CD8-positive, alpha-beta T cell (primary cell): ENCODE measurements at regions of chr1 and their contacts with region 1.

Region 1: GRCh38 chr1:44775078-44775929 is at the start of gene RPS8:
- DNase-seq: peak; percentile 77 to 96 (median 90)
- ATAC-seq: peak; percentile 80
- H3K4me3 ChIP-seq: peak within 1 kb of the TSS; percentile 84 to 94
- H3K4me3 Mint-ChIP-seq: peak within 1 kb of the TSS; percentile 92
- H3K27ac ChIP-seq: peak within 1 kb of the TSS; percentile 92 to 95
- H3K27ac Mint-ChIP-seq: peak within 1 kb of the TSS; percentile 98
- H3K4me1 ChIP-seq: peaks cover 25% of the 10 kb centered on the region
- H3K4me1 Mint-ChIP-seq: peaks cover 39% of the 10 kb centered on the region
- H3K27me3 ChIP-seq: no peaks in the 10 kb centered on the region
- H3K27me3 Mint-ChIP-seq: no peaks in the 10 kb centered on the region
- CTCF ChIP-seq: no peak
- total RNA-seq, gene RPS8: 3,381 to 3,465 TPM

Region 2: DNA sequence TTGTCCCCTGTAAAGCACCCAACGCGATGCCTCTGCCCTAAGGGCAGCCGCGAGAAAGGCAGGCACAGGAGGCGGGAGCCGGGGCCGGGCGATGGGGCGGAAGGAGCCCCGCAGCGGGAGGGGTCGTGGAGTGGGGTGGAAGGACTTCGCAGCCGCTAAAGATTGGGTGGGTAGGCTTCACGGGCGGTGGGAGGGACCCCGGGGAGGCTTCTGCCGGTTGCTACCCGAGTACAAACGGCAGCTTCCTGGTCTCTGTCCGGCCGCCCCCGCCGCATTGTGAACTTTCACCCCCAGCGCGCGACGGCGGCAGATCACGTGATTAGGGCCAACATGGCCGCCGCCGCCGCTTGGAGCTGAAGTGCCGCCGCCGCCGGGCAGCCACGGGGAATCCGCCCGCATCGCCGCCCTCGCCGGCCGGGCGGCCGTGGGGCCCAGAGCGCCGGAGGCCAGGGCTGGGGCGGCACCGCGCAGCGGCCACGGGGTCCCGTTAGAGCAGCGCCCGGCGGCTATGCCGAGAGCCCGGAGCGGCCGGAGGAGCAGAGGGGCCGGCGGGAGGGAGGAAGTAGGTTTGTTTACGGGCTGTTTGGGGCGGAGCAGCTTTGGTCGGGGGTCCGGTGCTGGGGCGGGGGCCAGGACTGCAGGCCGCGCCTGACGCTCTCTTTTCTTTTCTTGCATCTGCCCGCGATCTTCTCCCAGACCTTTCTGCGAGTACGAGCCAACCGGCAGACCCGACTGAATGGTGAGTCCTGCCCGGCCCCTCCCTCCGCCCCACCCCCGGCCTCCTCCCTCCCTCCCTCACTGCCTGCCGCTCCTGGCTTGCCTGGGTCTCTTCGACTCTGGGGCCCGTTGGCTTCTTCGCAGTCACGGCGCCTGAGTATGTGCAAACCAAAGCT is 143.4 kb before region 1 on chr1:
- CTCF ChIA-PET with region 1: no interaction called
- POLR2A ChIA-PET with region 1: interaction called, 3 read pairs
- intact Hi-C with region 1: loop called in 1 of 2 experiments (anchors 1 kb)
- DNase-seq: peak; percentile 73 to 95 (median 88)
- ATAC-seq: peak; percentile 75
- H3K4me3 ChIP-seq: peak overlapping the region; percentile 55 to 82
- H3K4me3 Mint-ChIP-seq: peak overlapping the region; percentile 90
- H3K27ac ChIP-seq: peak overlapping the region; percentile 86 to 97
- H3K27ac Mint-ChIP-seq: peak overlapping the region; percentile 98
- H3K4me1 ChIP-seq: peaks cover 20% of the 10 kb centered on the region
- H3K4me1 Mint-ChIP-seq: peaks cover 48% of the 10 kb centered on the region
- H3K27me3 ChIP-seq: no peaks in the 10 kb centered on the region
- H3K27me3 Mint-ChIP-seq: no peaks in the 10 kb centered on the region
- CTCF ChIP-seq: no peak

Region 3: DNA sequence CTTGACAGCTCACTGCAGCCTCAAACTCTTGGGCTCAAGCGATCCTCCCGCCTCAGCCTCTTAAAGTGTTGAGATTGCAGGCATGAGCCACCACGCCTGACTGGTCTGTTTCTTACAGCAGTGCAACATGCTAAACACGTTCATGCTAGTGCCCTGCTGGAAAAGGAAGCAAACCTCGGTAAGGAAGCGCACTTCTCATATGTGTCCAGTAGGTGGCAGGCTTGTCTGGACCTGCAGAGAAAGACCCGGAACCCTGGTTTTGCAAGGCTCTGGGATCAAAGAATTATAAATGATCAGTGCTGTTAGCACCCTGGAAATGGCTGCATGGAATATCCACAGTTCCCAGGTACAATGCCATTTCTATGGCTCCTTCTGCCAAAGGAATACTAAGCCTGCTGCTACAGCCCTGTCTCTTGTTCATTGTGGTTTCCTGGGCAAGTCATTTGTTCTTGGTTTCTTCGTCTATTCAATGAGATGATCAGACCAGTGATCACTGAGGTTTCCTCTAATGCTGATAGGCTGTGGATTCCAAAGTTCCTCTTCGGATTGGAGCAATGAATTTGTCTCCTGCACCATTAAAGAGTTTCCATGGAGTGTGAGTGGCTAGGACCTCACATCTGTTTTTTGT is 60.2 kb before region 1 on chr1:
- CTCF ChIA-PET with region 1: interaction called, 7 read pairs
- POLR2A ChIA-PET with region 1: no interaction called
- intact Hi-C with region 1: loop called in 1 of 2 experiments (anchors 2 kb)
- DNase-seq: peak; percentile 37 to 87 (median 63)
- ATAC-seq: peak; percentile 94
- H3K4me3 ChIP-seq: peak overlapping the region in 1 of 2 experiments; percentile 1
- H3K4me3 Mint-ChIP-seq: peak overlapping the region; percentile 64
- H3K27ac ChIP-seq: no peak overlapping the region
- H3K27ac Mint-ChIP-seq: peak overlapping the region; percentile 37
- H3K4me1 ChIP-seq: peaks cover 44% of the 10 kb centered on the region
- H3K4me1 Mint-ChIP-seq: peaks cover 44% of the 10 kb centered on the region
- H3K27me3 ChIP-seq: no peaks in the 10 kb centered on the region
- H3K27me3 Mint-ChIP-seq: no peaks in the 10 kb centered on the region
- CTCF ChIP-seq: peak; percentile 96

Region 4: DNA sequence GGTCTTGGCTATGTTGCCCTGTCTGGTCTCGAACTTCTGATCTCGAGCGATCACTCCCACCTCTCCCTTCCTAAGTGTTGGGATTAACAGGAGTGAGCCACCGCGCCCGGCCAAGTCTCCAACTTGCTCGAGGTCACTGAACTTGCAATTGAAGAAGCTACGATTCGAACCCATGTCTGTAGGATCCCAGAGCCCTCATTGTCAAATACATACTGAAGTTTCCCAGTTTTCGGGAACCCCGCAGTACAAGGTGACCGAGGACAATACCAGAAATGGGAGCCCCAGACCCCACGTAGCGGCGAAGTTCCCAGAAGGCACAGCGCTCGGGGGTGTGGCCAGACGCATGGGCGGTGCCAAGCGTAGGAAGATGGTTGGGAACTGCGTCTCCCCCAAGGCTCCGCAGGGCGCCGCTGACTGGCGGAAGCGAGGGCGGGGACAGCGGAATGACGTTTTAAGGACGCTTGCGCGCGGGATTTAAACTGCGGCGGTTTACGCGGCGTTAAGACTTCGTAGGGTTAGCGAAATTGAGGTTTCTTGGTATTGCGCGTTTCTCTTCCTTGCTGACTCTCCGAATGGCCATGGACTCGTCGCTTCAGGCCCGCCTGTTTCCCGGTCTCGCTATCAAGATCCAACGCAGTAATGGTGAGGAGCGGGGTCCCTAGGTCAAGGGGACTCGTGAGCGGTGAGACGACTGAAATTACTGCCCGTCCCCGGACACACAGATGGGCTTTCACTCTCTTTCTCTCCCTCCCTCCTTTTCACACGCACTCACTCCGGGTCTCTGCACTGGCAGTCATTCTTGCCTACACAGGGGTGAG is 35.7 kb before region 1 on chr1 and contains the start of gene KIF2C:
- CTCF ChIA-PET with region 1: no interaction called
- POLR2A ChIA-PET with region 1: interaction called, 9 read pairs
- intact Hi-C with region 1: loop called (anchors 1 kb)
- DNase-seq: peak; percentile 93 to 98 (median 96)
- ATAC-seq: peak; percentile 100
- H3K4me3 ChIP-seq: peak within 1 kb of the TSS; percentile 81 to 84
- H3K4me3 Mint-ChIP-seq: peak within 1 kb of the TSS; percentile 93
- H3K27ac ChIP-seq: peak within 1 kb of the TSS; percentile 69 to 88
- H3K27ac Mint-ChIP-seq: peak within 1 kb of the TSS; percentile 97
- H3K4me1 ChIP-seq: peaks cover 12% of the 10 kb centered on the region
- H3K4me1 Mint-ChIP-seq: peaks cover 17% of the 10 kb centered on the region
- H3K27me3 ChIP-seq: no peaks in the 10 kb centered on the region
- H3K27me3 Mint-ChIP-seq: no peaks in the 10 kb centered on the region
- CTCF ChIP-seq: no peak
- total RNA-seq, gene KIF2C: 0.58 to 0.81 TPM

Region 5: DNA sequence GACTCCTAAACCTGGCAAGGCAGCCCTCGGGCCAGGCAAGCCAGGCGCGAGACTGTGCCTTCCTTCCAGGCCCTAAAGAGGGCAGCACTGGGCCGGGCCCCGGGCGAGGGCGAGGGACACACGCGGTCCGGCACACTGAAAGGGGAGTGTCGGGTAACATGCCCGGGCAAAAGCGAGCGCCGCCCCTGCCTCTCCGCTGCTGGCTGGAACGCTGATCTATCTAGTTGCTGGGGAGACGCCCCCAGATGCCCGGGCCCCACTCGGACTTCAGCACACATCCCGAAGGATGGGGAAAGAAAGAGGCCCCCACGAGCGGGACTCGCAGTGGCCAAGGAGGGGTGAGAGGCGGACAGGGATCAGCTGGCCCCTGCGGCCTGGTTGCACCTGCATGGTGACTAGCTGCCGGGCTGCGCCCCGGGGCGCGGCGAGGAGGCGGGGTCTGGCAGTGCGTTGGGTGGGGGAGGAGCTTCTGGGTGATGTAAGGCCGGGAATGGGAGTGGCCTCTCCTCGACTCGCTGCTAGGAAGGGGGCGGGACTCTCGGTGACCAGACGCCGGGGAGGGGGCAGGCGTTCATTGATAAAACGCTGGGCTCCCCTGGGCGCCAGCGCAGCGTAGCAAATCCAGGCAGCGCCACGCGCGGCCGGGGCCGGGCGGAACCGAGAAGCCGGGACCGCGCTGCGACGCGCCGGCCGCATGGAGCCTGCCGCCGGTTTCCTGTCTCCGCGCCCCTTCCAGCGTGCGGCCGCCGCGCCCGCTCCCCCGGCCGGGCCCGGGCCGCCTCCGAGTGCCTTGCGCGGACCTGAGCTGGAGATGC is 24.7 kb after region 1 on chr1 and contains the start of gene PLK3:
- CTCF ChIA-PET with region 1: no interaction called
- POLR2A ChIA-PET with region 1: interaction called, 22 read pairs
- intact Hi-C with region 1: loop called in 1 of 2 experiments (anchors 2 kb)
- DNase-seq: peak; percentile 97 to 99 (median 98)
- ATAC-seq: peak; percentile 83
- H3K4me3 ChIP-seq: peak within 1 kb of the TSS; percentile 79 to 95
- H3K4me3 Mint-ChIP-seq: peak within 1 kb of the TSS; percentile 87
- H3K27ac ChIP-seq: peak within 1 kb of the TSS; percentile 91 to 98
- H3K27ac Mint-ChIP-seq: peak within 1 kb of the TSS; percentile 98
- H3K4me1 ChIP-seq: peaks cover 29% of the 10 kb centered on the region
- H3K4me1 Mint-ChIP-seq: peaks cover 37% of the 10 kb centered on the region
- H3K27me3 ChIP-seq: no peaks in the 10 kb centered on the region
- H3K27me3 Mint-ChIP-seq: no peaks in the 10 kb centered on the region
- CTCF ChIP-seq: peak; percentile 81
- total RNA-seq, gene PLK3: 568 to 599 TPM

Region 6: DNA sequence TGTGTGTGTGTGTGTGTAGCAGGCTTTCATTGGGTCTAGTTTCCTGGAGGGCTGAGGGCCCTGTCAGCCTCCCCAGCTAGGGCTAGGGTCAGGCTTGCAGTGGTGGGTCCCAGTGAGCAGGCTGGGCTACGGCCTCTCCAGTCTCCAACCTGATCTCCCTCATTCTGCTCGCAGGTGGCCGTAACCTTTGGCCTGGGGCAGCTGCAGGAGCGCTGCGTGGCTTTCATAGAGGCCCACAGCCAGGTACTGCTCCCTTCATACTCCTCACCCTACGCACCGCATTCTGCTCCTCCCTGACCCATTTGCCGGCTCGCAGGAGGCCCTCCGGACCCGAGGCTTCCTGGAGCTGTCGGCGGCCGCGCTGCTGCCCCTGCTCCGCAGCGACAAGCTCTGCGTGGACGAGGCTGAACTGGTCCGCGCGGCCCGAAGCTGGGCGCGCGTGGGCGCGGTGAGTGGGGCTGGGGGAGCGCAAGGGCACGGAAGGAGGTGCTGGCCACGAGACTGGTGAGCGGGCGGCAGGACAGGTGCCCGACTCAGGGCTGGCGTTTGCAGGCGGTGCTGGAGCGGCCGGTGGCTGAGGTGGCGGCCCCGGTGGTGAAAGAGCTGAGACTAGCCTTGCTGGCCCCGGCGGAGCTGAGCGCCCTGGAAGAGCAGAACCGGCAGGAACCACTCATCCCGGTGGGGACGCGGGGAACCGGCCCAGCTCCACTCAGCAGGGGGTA is 37.7 kb after region 1 on chr1:
- CTCF ChIA-PET with region 1: no interaction called
- POLR2A ChIA-PET with region 1: interaction called, 28 read pairs
- intact Hi-C with region 1: no loop called
- DNase-seq: peak in 2 of 9 experiments; percentile 27 to 50
- ATAC-seq: no peak
- H3K4me3 ChIP-seq: peak overlapping the region; percentile 59 to 74
- H3K4me3 Mint-ChIP-seq: peak overlapping the region; percentile 84
- H3K27ac ChIP-seq: peak overlapping the region in 1 of 2 experiments; percentile 85
- H3K27ac Mint-ChIP-seq: peak overlapping the region; percentile 99
- H3K4me1 ChIP-seq: peaks cover 62% of the 10 kb centered on the region
- H3K4me1 Mint-ChIP-seq: peaks cover 67% of the 10 kb centered on the region
- H3K27me3 ChIP-seq: no peaks in the 10 kb centered on the region
- H3K27me3 Mint-ChIP-seq: no peaks in the 10 kb centered on the region
- CTCF ChIP-seq: no peak

Region 7: DNA sequence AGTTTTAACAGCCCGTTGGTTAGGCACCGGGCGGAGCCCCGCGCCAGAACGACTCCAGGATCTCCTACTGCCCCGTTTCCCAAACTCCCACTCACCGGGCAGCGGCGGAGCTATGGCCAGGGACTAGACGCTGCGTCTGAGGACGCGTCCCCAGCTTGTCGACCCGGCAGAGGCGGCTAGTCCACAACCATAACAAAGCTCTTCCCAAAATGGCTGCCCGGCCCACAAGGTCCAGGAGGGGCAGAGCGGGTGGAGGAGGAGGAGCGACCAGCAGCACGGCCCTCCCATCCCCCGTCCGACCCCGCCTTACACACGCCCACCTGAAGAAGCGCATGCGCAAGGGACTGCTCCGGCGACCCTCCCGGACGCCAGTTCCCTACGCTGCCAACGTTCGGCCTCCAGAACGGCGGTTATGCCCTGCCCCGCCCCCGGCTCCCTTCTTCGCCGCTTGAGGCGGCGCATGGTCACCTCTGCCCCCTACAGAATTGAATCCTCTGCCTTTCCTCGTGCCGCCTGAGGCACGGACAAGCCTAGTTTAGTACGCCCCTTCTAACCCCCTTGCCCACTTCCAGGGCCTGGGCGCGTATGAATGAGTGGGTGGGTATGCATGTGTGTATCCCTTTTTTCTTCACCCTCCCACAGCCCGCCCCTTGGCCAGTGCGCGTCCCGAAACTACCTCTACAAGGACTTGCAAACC is 911.2 kb after region 1 on chr1 and contains the start of gene GPBP1L1:
- CTCF ChIA-PET with region 1: no interaction called
- POLR2A ChIA-PET with region 1: no interaction called
- intact Hi-C with region 1: loop called in 1 of 2 experiments (anchors 5 kb)
- DNase-seq: peak; percentile 95 to 98 (median 98)
- ATAC-seq: peak; percentile 72
- H3K4me3 ChIP-seq: peak within 1 kb of the TSS; percentile 99
- H3K4me3 Mint-ChIP-seq: peak within 1 kb of the TSS; percentile 97
- H3K27ac ChIP-seq: peak within 1 kb of the TSS; percentile 84 to 92
- H3K27ac Mint-ChIP-seq: peak within 1 kb of the TSS; percentile 100
- H3K4me1 ChIP-seq: peaks cover 39% of the 10 kb centered on the region
- H3K4me1 Mint-ChIP-seq: peaks cover 59% of the 10 kb centered on the region
- H3K27me3 ChIP-seq: no peaks in the 10 kb centered on the region
- H3K27me3 Mint-ChIP-seq: no peaks in the 10 kb centered on the region
- CTCF ChIP-seq: no peak
- total RNA-seq, gene GPBP1L1: 125 to 128 TPM